Activated CD4-positive, alpha-beta memory T cell treated with anti-CD3 and anti-CD28 coated beads, Interleukin-2, amount 10 ng/mL, durations not matched to agents 7 days and 5 days (primary cell): ENCODE measurements at regions of chr16 and their contacts with region 1.

Region 1: DNA sequence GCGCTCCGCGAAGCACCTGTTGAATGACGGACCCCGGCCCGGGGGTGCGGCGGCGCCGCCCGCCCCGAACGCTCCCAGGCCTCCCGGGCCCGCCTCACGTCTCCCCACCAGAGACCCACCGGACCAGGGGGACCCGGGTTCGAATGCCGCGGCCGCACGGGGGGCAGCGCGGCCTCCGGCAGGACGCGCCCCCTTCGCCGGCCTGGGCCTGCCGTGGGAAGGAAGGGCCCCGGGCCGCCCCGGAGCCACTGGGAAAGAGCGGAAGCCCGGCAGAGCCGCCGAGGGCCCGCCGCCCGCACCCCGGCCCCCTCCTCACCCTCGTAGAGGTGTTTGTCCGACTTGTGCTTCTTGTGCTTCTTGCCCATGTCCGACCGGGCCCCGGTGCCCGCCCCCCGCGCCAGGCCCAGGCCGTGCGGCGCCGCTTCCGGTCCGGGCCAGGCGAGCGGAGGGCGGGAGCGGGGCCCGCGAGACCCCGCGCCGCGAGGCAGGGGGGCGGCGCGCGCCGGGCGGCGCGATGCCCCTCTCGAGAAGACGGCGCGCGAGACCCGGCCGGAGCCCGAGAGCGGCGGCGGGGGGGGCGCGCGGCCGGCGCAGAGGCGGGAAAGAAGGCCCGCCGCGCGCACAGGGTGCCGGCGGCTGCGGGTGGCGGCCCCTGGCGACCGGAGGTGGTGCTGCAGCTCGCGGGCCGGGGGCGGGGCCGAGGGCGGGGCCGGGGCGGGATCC is at the start of gene BRD7:
- DNase-seq: peak; percentile 80
- H3K4me3 Mint-ChIP-seq: peak within 1 kb of the TSS; percentile 85
- H3K27ac Mint-ChIP-seq: peak within 1 kb of the TSS; percentile 71
- H3K4me1 Mint-ChIP-seq: peaks cover 46% of the 10 kb centered on the region
- H3K27me3 Mint-ChIP-seq: peaks cover 4% of the 10 kb centered on the region
- total RNA-seq, gene BRD7: 93.3 to 101 TPM

Region 2: DNA sequence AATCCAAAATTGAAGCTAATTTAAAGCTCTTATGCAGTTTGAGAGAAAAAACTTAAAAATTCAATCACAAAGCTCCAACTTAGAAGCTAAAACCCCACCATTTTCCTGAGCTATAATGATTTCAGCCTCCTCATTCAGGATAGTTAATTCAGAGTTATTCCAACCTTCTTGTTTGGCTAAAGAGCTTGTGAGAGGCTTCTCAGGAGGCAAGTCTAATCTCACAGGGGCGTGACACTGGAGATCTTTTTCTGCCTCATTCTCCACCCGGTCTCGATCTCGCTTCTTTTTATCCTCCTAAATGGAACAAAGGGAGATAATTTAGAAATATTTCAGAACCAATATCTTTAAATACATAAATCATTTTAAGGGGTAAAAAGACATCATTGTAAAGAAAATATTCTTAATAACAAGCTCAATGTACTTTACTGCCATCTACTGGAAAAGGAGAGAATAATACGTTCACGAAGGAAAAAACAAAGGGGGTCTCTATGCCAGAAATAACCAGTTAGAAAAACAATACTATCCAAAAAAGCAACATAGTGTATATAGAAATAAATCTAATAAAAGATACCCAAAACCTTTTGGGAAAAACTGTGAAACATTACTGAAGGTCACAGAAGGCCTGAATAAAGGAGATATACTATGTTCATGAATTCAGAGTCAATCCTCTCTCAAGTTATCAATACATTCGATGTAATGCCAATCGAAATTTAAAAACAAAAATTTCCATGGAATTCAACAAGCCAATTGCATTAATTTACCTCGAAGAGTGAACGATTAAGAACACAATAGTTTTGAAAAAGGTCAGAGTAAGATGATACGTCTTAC is 13.7 kb before region 1 on chr16:
- CTCF ChIA-PET with region 1: interaction called, 18 read pairs
- POLR2A ChIA-PET with region 1: interaction called, 15 read pairs
- DNase-seq: no peak
- H3K4me3 Mint-ChIP-seq: no peak overlapping the region
- H3K27ac Mint-ChIP-seq: no peak overlapping the region
- H3K4me1 Mint-ChIP-seq: peaks cover 30% of the 10 kb centered on the region
- H3K27me3 Mint-ChIP-seq: no peaks in the 10 kb centered on the region